Transverse colon (tissue), 4 donors: ENCODE measurements at regions of chr4 and their contacts with region 1.

Region 1: DNA sequence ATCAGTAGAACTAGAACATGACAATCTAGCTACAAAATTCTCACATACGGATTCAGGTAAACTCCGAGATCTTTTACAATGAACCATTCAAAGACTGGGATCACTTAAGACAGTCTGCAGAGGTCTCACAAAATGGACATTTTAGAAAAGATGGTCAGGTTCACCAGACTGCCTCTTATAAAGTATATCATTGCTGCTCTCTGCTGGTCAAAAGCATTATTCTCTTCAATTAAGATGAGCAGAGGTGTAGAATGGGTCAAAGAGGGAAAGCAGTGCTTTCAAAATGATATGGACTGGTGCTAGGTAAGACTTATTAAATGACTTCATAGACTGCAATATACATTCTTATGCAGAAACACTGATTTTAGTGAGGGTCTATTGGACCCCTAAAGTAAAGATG is 434.7 kb downstream of the PACRGL start:
- DNase-seq: no peak
- H3K4me3 ChIP-seq: no peak overlapping the region
- H3K27ac ChIP-seq: no peak overlapping the region
- H3K4me1 ChIP-seq: no peaks in the 10 kb centered on the region
- H3K27me3 ChIP-seq: no peaks in the 10 kb centered on the region
- CTCF ChIP-seq: peak; percentile 32 to 46 (median 40)
- EP300 ChIP-seq: no peak
- POLR2A ChIP-seq: no peak

Region 2: GRCh38 chr4:20237894-20238537 is 897.0 kb before region 1 on chr4:
- in situ Hi-C with region 1: no loop called
- intact Hi-C with region 1: no loop called
- DNase-seq: no peak
- H3K4me3 ChIP-seq: no peak overlapping the region
- H3K27ac ChIP-seq: no peak overlapping the region
- H3K4me1 ChIP-seq: no peaks in the 10 kb centered on the region
- H3K27me3 ChIP-seq: no peaks in the 10 kb centered on the region
- CTCF ChIP-seq: no peak
- EP300 ChIP-seq: no peak
- POLR2A ChIP-seq: no peak

Region 3: GRCh38 chr4:20773144-20773997 is 361.6 kb before region 1 on chr4:
- in situ Hi-C with region 1: loop called in 3 of 4 experiments (anchors 5 to 10 kb)
- intact Hi-C with region 1: loop called (anchors 5 kb)
- DNase-seq: peak; percentile 20
- H3K4me3 ChIP-seq: no peak overlapping the region
- H3K27ac ChIP-seq: no peak overlapping the region
- H3K4me1 ChIP-seq: peaks cover 0 to 10% (median 1%) of the 10 kb centered on the region in 4 donors
- H3K27me3 ChIP-seq: no peaks in the 10 kb centered on the region
- CTCF ChIP-seq: peak; percentile 62 to 70 (median 66)
- EP300 ChIP-seq: no peak
- POLR2A ChIP-seq: no peak

Region 4: DNA sequence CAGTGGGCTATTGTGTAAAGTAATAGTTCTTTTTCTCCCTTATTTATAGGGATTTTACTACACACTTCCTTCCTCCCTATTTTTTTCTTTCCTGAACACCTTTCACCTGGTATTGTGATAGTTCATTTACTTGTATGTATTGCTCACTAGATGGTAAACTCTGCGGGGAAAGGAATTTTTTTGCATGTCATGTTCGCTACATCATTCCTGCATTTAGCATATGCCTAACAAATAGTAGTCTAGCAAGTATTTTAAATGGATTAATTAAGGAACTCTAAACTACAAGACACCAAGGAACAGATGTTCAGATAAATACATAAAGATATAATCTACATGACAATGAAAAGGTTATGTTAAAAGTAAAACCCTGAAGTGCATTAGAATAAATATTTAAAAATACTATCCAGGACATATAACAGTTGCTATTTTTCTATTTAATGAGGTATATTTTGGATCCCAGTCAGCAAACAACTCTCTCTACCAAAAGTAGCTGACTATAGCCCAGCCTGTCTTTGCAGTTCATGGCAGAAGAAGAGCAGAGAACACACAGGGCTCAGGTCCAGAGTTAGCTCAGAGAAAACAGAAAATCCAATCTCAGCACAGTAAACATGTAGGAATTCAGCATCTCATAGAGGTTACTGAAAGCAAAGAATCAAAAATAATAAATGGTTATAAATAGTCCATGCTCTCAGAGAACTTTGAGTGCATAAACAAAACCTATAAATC is 346.9 kb before region 1 on chr4:
- in situ Hi-C with region 1: loop called in 1 of 4 experiments (anchors 10 kb)
- intact Hi-C with region 1: no loop called
- DNase-seq: no peak
- H3K4me3 ChIP-seq: no peak overlapping the region
- H3K27ac ChIP-seq: peak overlapping the region in 1 of 4 donors; percentile 31
- H3K4me1 ChIP-seq: no peaks in the 10 kb centered on the region
- H3K27me3 ChIP-seq: no peaks in the 10 kb centered on the region
- CTCF ChIP-seq: no peak
- EP300 ChIP-seq: no peak
- POLR2A ChIP-seq: no peak

Region 5: DNA sequence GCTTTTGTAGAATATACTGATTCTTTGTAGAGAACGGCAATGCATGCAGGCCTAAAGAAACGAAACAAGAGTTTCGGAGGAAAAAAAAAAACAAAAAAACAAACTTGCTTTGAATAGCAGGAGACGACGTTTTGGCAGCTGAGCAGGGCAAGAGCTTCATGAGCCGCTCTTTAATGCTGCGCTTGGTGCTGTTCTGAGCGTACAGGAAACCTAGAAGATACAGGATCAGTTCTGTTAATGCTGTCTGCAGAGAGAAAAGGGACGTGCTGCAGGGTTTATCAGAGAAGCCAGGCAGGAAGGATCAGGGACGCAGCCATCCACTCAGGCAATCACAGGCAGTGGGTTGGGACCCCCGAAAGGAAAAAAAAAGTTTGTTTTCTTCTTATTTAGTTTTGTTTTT is 252.5 kb before region 1 on chr4:
- in situ Hi-C with region 1: no loop called
- intact Hi-C with region 1: no loop called
- DNase-seq: no peak
- H3K4me3 ChIP-seq: no peak overlapping the region
- H3K27ac ChIP-seq: no peak overlapping the region
- H3K4me1 ChIP-seq: no peaks in the 10 kb centered on the region
- H3K27me3 ChIP-seq: no peaks in the 10 kb centered on the region
- CTCF ChIP-seq: no peak
- EP300 ChIP-seq: no peak
- POLR2A ChIP-seq: no peak

Region 6: GRCh38 chr4:21061902-21062301 is 73.1 kb before region 1 on chr4:
- in situ Hi-C with region 1: no loop called
- intact Hi-C with region 1: no loop called
- DNase-seq: no peak
- H3K4me3 ChIP-seq: no peak overlapping the region
- H3K27ac ChIP-seq: no peak overlapping the region
- H3K4me1 ChIP-seq: no peaks in the 10 kb centered on the region
- H3K27me3 ChIP-seq: no peaks in the 10 kb centered on the region
- CTCF ChIP-seq: no peak
- EP300 ChIP-seq: no peak
- POLR2A ChIP-seq: no peak